CD14-positive monocyte (primary cell): ENCODE measurements at regions of chr11 and their contacts with region 1.

Region 1: GRCh38 chr11:65711785-65712632 is at the start of gene KAT5:
- DNase-seq: peak; percentile 97 to 99 (median 99)
- H3K4me3 ChIP-seq: peak within 1 kb of the TSS; percentile 56 to 80 (median 77)
- H3K4me3 Mint-ChIP-seq: peak within 1 kb of the TSS; percentile 84 to 91
- H3K27ac ChIP-seq: peak within 1 kb of the TSS; percentile 96 to 100
- H3K27ac Mint-ChIP-seq: peak within 1 kb of the TSS; percentile 98 to 99 (median 99)
- H3K4me1 ChIP-seq: peaks cover 18 to 25% of the 10 kb centered on the region in 2 donors
- H3K4me1 Mint-ChIP-seq: peaks cover 24% of the 10 kb centered on the region
- H3K27me3 ChIP-seq: no peaks in the 10 kb centered on the region
- H3K27me3 Mint-ChIP-seq: peaks cover 2% of the 10 kb centered on the region in 3 donors
- CTCF ChIP-seq: peak; percentile 98
- polyA plus RNA-seq, gene KAT5: 32.5 to 48.7 (median 33.1) TPM

Region 2: GRCh38 chr11:65546217-65546958 is 165.6 kb before region 1 on chr11:
- intact Hi-C with region 1: no loop called
- DNase-seq: peak; percentile 79 to 83 (median 81)
- H3K4me3 ChIP-seq: peak overlapping the region; percentile 29 to 79 (median 34)
- H3K4me3 Mint-ChIP-seq: peak overlapping the region; percentile 69 to 83
- H3K27ac ChIP-seq: no peak overlapping the region
- H3K27ac Mint-ChIP-seq: peak overlapping the region in 4 of 7 donors; percentile 10 to 65 (median 36)
- H3K4me1 ChIP-seq: peaks cover 14 to 24% of the 10 kb centered on the region in 2 donors
- H3K4me1 Mint-ChIP-seq: peaks cover 26% of the 10 kb centered on the region
- H3K27me3 ChIP-seq: no peaks in the 10 kb centered on the region
- H3K27me3 Mint-ChIP-seq: peaks cover 17 to 18% (median 18%) of the 10 kb centered on the region in 3 donors
- CTCF ChIP-seq: no peak

Region 3: DNA sequence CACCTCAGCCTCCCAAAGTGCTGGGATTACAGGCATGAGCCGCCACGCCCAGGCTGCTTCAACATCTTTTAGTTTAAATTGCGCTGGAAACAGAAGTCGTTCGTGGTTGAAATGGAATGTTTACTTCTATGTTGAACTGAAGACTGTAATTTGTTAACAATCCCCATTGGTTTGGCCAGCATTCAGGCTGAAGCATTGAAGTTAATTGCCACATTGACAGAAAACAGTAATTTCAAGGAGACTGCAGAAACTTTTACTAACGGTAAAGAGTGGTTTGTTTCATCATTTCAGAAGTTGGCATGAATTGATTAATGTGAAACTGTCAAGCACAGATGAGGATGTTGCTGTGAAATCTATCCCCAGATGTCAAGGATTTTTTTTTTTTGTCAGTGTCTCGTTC is 54.5 kb after region 1 on chr11:
- intact Hi-C with region 1: loop called (anchors 2 to 5 kb)
- DNase-seq: no peak
- H3K4me3 ChIP-seq: no peak overlapping the region
- H3K4me3 Mint-ChIP-seq: no peak overlapping the region
- H3K27ac ChIP-seq: no peak overlapping the region
- H3K27ac Mint-ChIP-seq: peak overlapping the region in 4 of 7 donors; percentile 26 to 80 (median 66)
- H3K4me1 ChIP-seq: peaks cover 41 to 49% of the 10 kb centered on the region in 2 donors
- H3K4me1 Mint-ChIP-seq: peaks cover 52% of the 10 kb centered on the region
- H3K27me3 ChIP-seq: no peaks in the 10 kb centered on the region
- H3K27me3 Mint-ChIP-seq: peaks cover 0 to 2% (median 0%) of the 10 kb centered on the region in 3 donors
- CTCF ChIP-seq: no peak

Region 4: DNA sequence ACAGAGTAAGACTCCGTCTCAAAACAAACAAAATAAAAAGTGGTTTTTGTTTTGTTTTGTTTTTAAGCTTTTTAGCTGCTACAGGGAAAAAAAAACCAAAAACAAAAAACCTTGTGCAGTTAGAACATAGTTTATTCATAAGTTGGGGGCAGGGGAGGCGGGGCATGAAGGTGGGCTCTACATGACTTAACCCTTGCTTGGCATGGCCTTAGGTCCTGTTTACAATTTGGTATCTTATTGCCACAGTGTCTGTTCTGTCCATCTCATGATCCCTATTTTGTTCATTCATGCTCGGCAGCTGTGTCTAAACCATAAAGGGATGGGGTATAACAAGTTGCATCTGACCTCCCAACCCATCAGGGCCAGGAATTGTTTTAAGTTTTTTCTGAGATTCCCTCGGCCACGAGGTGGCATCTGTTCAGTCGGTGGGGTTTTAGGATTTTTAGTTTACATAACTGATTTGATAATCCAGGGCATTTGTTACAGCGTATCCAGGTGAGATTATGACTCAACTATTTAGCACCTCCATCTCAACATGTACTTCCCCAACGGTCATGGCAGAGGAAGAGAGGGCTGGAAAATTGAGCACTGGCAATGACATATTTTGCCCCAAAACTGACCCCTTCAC is 61.9 kb after region 1 on chr11:
- intact Hi-C with region 1: loop called (anchors 2 to 5 kb)
- DNase-seq: no peak
- H3K4me3 ChIP-seq: peak overlapping the region in 1 of 3 experiments; percentile 4
- H3K4me3 Mint-ChIP-seq: no peak overlapping the region
- H3K27ac ChIP-seq: peak overlapping the region in 1 of 2 donors; percentile 98
- H3K27ac Mint-ChIP-seq: peak overlapping the region; percentile 99 to 100 (median 100)
- H3K4me1 ChIP-seq: peaks cover 82 to 87% of the 10 kb centered on the region in 2 donors
- H3K4me1 Mint-ChIP-seq: peaks cover 86% of the 10 kb centered on the region
- H3K27me3 ChIP-seq: no peaks in the 10 kb centered on the region
- H3K27me3 Mint-ChIP-seq: peaks cover 0 to 2% (median 0%) of the 10 kb centered on the region in 3 donors
- CTCF ChIP-seq: no peak

Region 5: DNA sequence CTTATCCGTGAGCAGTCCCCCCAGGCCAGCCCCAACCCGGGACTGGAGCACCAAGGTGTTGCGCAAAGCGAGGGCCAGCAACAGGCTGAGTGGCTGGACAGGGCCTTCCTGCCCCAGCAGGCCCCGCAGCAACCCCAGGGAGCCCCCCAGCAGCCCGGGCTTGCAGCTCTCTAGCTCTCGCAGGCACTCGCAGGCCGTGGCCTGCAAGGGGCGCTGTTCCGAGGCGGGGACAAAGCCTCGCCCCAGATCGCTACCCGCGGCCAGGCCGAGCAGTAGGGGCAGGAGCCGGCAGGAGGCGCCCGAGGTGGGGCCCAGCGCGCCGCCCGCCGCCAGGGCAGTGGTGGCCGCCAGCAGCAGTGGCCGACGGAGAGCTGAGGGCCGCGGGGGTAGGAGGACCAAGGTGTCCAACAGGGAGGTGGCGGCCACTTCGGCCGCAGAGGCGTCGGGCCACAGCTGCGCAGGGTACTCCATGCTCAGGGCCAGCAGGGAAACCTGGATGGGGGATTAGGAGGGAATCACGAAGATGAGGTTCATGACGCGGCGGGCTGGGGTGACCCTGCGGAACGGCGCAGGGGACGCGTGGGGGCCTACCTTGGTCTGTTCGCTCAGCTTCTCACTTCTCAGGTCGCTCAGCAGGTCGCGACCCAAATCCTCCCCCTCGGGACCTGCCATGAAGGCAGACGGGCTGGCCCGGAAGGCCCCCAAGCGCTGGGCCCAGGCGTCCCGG is 68.0 kb after region 1 on chr11:
- intact Hi-C with region 1: loop called (anchors 5 kb)
- DNase-seq: peak; percentile 81 to 87 (median 86)
- H3K4me3 ChIP-seq: peak overlapping the region; percentile 76 to 99 (median 99)
- H3K4me3 Mint-ChIP-seq: peak overlapping the region; percentile 89 to 94
- H3K27ac ChIP-seq: peak overlapping the region; percentile 98 to 99
- H3K27ac Mint-ChIP-seq: peak overlapping the region; percentile 89 to 99 (median 96)
- H3K4me1 ChIP-seq: peaks cover 52 to 57% of the 10 kb centered on the region in 2 donors
- H3K4me1 Mint-ChIP-seq: peaks cover 41% of the 10 kb centered on the region
- H3K27me3 ChIP-seq: peaks cover under 1 to 32% of the 10 kb centered on the region in 2 donors
- H3K27me3 Mint-ChIP-seq: peaks cover 17 to 31% (median 23%) of the 10 kb centered on the region in 3 donors
- CTCF ChIP-seq: peak; percentile 100

Region 6: DNA sequence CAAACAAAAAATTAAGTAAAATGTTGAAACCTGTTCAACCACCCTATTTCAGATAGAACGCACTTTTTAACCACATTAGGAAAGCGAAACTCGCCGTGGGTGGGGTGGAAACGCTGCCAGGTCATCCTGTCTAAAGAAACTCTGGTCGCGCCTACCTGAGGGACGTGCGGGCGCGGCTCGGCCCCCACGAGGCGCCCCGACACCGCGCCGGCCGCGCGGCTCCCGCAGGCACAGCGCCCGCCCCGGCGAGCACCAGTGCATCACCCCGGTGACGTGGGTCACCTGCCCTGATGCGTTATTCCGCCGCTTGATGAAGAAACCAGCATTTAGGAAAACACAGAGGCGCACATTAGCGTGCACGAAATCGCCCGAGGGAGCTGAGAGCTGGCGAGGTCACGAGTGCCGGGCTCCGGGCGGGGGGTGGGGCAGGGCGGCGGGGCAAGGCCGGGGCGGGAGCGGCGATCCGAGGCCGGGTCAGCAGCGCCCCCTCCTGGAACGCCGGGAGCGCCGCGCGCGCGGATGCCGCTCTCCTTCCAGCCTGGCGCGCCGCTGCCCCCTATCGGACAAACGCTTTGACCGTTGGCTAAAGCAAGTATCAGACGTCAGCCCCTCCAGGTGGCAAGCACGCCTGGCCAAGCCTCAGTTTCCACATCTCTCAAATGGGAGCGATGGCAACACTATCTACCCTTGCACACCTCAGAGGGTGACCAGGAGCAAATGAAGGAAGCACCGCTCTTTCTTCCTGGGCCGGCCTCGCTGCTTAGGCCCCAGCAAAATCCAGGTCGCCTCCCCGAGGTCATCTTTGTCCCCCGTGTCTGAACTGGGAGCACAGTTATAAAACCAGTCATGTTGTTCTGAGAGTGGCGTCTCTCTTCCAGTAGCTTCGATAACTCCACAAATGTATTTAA is 106.1 kb after region 1 on chr11:
- intact Hi-C with region 1: loop called (anchors 1 kb)
- DNase-seq: peak; percentile 87 to 94 (median 88)
- H3K4me3 ChIP-seq: peak overlapping the region; percentile 45 to 80 (median 77)
- H3K4me3 Mint-ChIP-seq: peak overlapping the region; percentile 74 to 87
- H3K27ac ChIP-seq: peak overlapping the region; percentile 65 to 84
- H3K27ac Mint-ChIP-seq: peak overlapping the region; percentile 72 to 88 (median 83)
- H3K4me1 ChIP-seq: peaks cover 32 to 39% of the 10 kb centered on the region in 2 donors
- H3K4me1 Mint-ChIP-seq: peaks cover 50% of the 10 kb centered on the region
- H3K27me3 ChIP-seq: no peaks in the 10 kb centered on the region
- H3K27me3 Mint-ChIP-seq: peaks cover 0 to 1% (median 0%) of the 10 kb centered on the region in 3 donors
- CTCF ChIP-seq: peak; percentile 100

Region 7: GRCh38 chr11:65888163-65888814 is 176.3 kb after region 1 on chr11 and contains the start of gene FIBP:
- intact Hi-C with region 1: loop called in 1 of 2 experiments (anchors 1 kb)
- DNase-seq: peak; percentile 95 to 97 (median 97)
- H3K4me3 ChIP-seq: peak within 1 kb of the TSS; percentile 63 to 82 (median 69)
- H3K4me3 Mint-ChIP-seq: peak within 1 kb of the TSS; percentile 95 to 99
- H3K27ac ChIP-seq: peak within 1 kb of the TSS; percentile 88 to 95
- H3K27ac Mint-ChIP-seq: peak within 1 kb of the TSS; percentile 98 to 100 (median 99)
- H3K4me1 ChIP-seq: peaks cover 57 to 81% of the 10 kb centered on the region in 2 donors
- H3K4me1 Mint-ChIP-seq: peaks cover 63% of the 10 kb centered on the region
- H3K27me3 ChIP-seq: no peaks in the 10 kb centered on the region
- H3K27me3 Mint-ChIP-seq: peaks cover 0 to 7% (median 0%) of the 10 kb centered on the region in 3 donors
- CTCF ChIP-seq: peak; percentile 95
- polyA plus RNA-seq, gene FIBP: 79.1 to 109 (median 101) TPM

Region 8: DNA sequence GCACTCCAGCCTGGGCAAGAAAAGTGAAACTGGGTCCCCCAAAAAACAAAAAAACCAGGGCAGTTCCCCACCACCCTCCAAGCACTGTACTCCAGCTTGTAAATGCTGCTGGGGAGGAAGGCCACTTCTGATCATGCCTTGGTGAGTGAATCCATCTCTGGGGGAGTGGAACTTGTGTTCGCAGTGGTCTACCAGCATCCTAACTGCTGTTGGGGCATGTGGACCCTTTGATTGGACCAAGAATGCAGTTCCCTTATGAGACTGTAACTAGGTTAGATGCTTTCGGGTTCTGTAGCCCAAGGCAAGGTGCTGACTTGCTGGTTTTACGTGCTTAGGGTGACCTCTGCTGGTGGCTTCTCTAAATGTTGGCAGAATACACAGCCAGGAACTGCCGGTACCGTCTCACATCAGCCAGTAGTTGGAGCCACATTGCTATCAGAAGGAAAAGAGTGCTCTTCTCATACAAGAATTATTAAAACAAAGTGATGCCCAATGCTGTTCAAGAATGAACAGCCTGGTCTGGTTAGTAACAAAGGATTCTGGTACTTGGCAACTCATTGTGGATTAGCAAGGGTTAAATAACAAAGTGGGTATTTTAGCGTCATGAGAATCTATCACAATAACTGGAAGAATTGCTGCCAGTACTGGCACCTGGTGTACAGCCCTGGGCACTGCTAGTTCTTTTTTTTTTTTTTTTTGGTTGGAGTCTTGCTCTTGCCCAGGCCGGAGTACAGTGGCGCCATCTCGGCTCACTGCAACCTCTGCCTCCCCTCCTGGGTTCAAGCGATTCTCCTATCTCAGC is 277.0 kb after region 1 on chr11:
- intact Hi-C with region 1: loop called (anchors 2 kb)
- DNase-seq: peak; percentile 90 to 92 (median 90)
- H3K4me3 ChIP-seq: no peak overlapping the region
- H3K4me3 Mint-ChIP-seq: no peak overlapping the region
- H3K27ac ChIP-seq: peak overlapping the region; percentile 5 to 31
- H3K27ac Mint-ChIP-seq: peak overlapping the region; percentile 48 to 87 (median 75)
- H3K4me1 ChIP-seq: peaks cover 16 to 24% of the 10 kb centered on the region in 2 donors
- H3K4me1 Mint-ChIP-seq: peaks cover 12% of the 10 kb centered on the region
- H3K27me3 ChIP-seq: no peaks in the 10 kb centered on the region
- H3K27me3 Mint-ChIP-seq: no peaks in the 10 kb centered on the region
- CTCF ChIP-seq: peak; percentile 99